BJ (cell line): ENCODE measurements at regions of chr1 and their contacts with region 1.

Region 1: DNA sequence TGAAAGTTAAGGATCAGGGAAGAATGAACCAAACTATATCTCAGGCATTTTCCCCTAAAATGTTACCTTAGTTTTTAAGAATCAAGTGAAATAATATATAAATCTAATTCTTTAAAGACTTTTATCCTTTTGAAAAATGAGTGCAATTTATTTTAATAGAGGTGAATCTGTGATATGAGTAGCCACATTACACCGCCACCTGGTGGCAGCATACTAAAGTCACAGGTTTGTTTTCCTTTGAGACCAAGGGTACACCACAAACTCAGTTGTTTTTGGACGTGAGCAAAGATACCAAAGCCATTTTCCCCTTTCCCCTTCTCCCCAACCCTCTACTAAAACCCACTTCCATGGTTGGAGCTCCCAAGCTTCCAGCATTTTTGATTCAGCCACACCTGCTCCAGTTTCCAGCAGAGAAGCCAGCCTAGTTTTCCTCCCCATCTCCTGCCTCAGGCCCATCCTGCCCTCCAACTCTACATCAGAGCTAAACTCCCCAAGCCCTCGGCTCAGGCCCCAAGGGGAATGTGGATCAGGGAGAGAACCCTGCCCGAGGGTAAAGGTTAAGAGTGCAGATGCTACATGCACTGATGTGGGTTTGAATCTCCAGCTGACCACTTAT is 22.9 kb upstream of the LDLRAP1 start:
- DNase-seq: no peak
- H3K4me3 ChIP-seq: no peak overlapping the region
- H3K27me3 ChIP-seq: peaks cover 3% of the 10 kb centered on the region
- CTCF ChIP-seq: peak; percentile 73

Region 2: DNA sequence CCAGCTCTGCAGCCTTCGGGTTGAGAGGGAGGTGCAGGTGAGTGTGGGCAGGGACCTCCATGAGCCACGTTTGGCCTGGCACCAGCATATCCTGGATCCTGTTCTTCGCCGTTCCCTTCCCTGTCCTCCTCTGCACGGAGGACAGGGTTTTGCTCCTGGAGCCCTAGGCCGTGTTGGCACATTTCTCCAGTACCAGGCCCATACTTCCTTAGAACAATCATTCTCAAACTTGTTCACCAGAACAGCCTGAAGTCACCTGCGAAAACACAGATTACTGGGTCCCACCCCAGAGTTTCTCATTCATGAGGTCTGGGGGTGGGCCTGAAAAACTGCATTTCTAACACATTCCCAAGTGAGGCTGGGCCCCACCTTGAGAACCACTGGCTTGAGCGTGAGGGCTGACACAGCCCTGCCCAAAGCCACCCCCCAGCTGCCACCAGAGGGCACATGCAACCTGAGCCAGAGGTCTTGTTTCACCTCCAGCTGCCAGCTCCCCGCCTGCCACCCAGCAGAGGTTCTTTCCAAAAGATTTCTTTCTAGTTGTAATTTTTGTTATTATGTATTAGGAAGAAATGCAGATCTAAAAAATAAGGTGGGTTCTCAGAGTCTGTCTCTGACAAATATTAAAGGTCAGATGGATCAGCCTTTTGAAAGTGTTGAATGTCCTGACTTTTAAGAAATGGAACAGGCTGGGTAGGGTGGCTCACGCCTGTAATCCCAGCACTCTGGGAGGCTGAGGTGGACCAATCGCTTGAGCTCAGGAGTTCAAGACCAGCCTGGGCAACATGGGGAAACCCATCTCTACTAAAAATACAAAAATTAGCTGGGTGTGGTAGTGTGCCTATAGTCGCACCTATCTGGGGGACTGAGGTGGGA is 16.8 kb before region 1 on chr1:
- CTCF ChIA-PET with region 1: interaction called, 29 read pairs
- POLR2A ChIA-PET with region 1: no interaction called
- DNase-seq: no peak
- H3K4me3 ChIP-seq: no peak overlapping the region
- H3K27me3 ChIP-seq: no peaks in the 10 kb centered on the region
- CTCF ChIP-seq: peak; percentile 50

Region 3: GRCh38 chr1:25538191-25538761 is 17.7 kb after region 1 on chr1:
- CTCF ChIA-PET with region 1: interaction called, 25 read pairs
- POLR2A ChIA-PET with region 1: no interaction called
- DNase-seq: no peak
- H3K4me3 ChIP-seq: no peak overlapping the region
- H3K27me3 ChIP-seq: peaks cover 6% of the 10 kb centered on the region
- CTCF ChIP-seq: no peak